ENCODE measurements at regions of chr7 and their contacts with region 1.

Region 1: GRCh38 chr7:107201795-107202450 is 33.1 kb downstream of the HBP1 start:
- DNase-seq: peak; percentile 51

Region 2: GRCh38 chr7:107874605-107875446 is 672.9 kb after region 1 on chr7:
- in situ Hi-C with region 1: loop called (anchors 25 kb)
- DNase-seq: peak; percentile 84